SK-N-SH (cell line): ENCODE measurements at regions of chr2 and their contacts with region 1.

Region 1: GRCh38 chr2:101793277-101793969 is 95.9 kb downstream of the MAP4K4 start:
- DNase-seq: peak; percentile 22
- H3K4me3 ChIP-seq: no peak overlapping the region
- H3K27ac ChIP-seq: peak overlapping the region; percentile 11 to 13; a peak in 3 of 4 replicates
- H3K4me1 ChIP-seq: peaks cover 20 to 43% of the 10 kb centered on the region in 2 experiments
- H3K27me3 ChIP-seq: no peaks in the 10 kb centered on the region
- CTCF ChIP-seq: peak; percentile 40
- EP300 ChIP-seq: no peak; a peak in 1 of 4 replicates
- RAD21 ChIP-seq: peak; percentile 66

Region 2: GRCh38 chr2:101770726-101771125 is 22.7 kb before region 1 on chr2:
- CTCF ChIA-PET with region 1: interaction called, 10 read pairs
- POLR2A ChIA-PET with region 1: no interaction called
- DNase-seq: peak; percentile 41
- H3K4me3 ChIP-seq: no peak overlapping the region
- H3K27ac ChIP-seq: peak overlapping the region; percentile 8 to 19; a peak in 2 of 4 replicates
- H3K4me1 ChIP-seq: peaks cover 26 to 56% of the 10 kb centered on the region in 2 experiments
- H3K27me3 ChIP-seq: no peaks in the 10 kb centered on the region
- CTCF ChIP-seq: peak; percentile 57
- EP300 ChIP-seq: no peak
- RAD21 ChIP-seq: peak; percentile 57

Region 3: DNA sequence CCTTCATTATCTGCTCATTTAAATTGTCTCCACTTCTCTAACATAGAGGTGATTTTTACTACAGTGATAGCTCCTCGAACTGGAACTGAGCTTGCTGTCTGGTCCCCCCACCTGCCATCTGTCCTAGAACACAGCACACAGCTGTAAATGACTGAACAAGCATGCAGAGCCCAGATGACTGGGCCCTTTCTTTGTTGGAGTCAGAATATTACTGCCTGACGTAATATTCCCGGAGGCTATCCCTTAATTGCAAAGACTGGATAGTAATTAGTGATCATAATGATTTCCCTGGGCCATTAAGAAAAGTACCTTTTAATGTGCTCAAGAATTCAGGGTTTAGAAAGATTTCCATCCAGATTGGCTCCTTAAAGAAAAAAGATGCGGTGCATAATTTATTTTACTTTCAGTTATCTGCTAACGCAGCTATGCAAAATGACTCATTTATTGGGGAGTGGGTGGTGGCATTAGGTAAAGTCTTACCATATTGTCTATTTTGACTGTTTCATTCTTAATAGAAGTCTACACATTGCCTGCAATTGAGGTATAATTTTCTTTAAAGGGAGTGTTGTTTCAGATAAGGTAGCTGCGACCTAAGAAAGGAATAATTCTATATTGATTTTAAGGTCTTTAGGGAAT is 11.5 kb before region 1 on chr2:
- CTCF ChIA-PET with region 1: interaction called, 12 read pairs
- POLR2A ChIA-PET with region 1: no interaction called
- DNase-seq: no peak
- H3K4me3 ChIP-seq: no peak overlapping the region
- H3K27ac ChIP-seq: peak overlapping the region in 1 of 2 experiments; percentile 40; a peak in 1 of 4 replicates
- H3K4me1 ChIP-seq: peaks cover 24 to 26% of the 10 kb centered on the region in 2 experiments
- H3K27me3 ChIP-seq: no peaks in the 10 kb centered on the region
- CTCF ChIP-seq: no peak
- EP300 ChIP-seq: no peak
- RAD21 ChIP-seq: no peak